ENCODE measurements at regions of chr1 and their contacts with region 1.

Region 1: DNA sequence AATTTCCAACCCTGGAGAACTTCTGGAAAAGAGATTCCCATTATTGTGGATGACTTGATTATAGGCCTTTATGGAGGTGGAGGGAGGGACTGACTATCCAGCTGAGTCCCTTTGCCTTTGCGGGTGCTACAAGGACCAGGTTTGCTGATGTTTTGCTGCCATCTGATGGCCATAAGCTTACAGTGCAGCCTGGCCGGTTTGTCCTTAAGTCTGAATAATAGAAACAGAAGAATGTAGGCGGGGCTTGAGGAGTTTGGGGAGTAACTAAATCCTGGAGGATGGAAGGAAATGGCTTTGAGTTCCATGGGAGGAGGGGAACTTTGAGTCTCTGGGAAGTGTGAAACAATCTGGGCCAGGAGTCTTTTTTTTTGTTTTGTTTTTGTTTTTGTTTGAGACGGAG is 55.7 kb upstream of the CD1D start:
- DNase-seq: peak; percentile 79
- CTCF ChIP-seq: peak; percentile 93

Region 2: GRCh38 chr1:157984469-157984868 is 140.5 kb before region 1 on chr1:
- in situ Hi-C with region 1: loop called (anchors 10 kb)
- DNase-seq: no peak
- CTCF ChIP-seq: no peak

Region 3: GRCh38 chr1:158180741-158181576 is 56.0 kb after region 1 on chr1 and contains the start of gene CD1D:
- in situ Hi-C with region 1: no loop called
- DNase-seq: peak; percentile 65
- CTCF ChIP-seq: no peak

Region 4: DNA sequence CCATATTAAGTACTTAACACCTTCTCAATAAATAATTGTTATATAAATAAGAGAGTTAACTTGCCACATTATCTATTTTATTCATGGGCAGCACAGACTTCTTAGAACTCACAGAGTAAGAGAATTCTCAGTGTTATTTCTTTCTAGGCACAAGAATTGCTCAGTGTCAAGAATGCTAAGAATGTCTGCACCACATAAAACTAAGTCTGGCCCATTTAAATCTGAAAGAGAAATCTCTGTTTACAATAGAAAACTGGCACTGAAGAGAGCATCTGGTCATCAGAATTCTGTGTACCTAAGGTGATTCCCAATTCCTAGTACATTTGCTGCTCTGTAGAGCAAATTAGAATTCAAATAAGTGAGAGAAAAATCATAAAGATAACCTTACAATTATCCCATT is 297.2 kb after region 1 on chr1:
- in situ Hi-C with region 1: no loop called
- DNase-seq: no peak
- CTCF ChIP-seq: no peak